T-cell (primary cell): ENCODE measurements at regions of chr22 and their contacts with region 1.

Region 1: GRCh38 chr22:41746567-41747400 is 47.5 kb downstream of the MEI1 start:
- DNase-seq: peak; percentile 4 to 78 (median 33)
- ATAC-seq: peak; percentile 82 to 94 (median 84)
- H3K4me3 ChIP-seq: no peak overlapping the region
- H3K4me3 Mint-ChIP-seq: no peak overlapping the region
- H3K27ac ChIP-seq: no peak overlapping the region
- H3K27ac Mint-ChIP-seq: no peak overlapping the region
- H3K4me1 ChIP-seq: peaks cover 0 to 4% of the 10 kb centered on the region in 2 experiments
- H3K4me1 Mint-ChIP-seq: peaks cover 0 to 5% (median 3%) of the 10 kb centered on the region in 3 donors
- H3K27me3 ChIP-seq: peaks cover 0 to 11% of the 10 kb centered on the region in 2 experiments
- H3K27me3 Mint-ChIP-seq: peaks cover 3 to 11% of the 10 kb centered on the region in 2 donors

Region 2: DNA sequence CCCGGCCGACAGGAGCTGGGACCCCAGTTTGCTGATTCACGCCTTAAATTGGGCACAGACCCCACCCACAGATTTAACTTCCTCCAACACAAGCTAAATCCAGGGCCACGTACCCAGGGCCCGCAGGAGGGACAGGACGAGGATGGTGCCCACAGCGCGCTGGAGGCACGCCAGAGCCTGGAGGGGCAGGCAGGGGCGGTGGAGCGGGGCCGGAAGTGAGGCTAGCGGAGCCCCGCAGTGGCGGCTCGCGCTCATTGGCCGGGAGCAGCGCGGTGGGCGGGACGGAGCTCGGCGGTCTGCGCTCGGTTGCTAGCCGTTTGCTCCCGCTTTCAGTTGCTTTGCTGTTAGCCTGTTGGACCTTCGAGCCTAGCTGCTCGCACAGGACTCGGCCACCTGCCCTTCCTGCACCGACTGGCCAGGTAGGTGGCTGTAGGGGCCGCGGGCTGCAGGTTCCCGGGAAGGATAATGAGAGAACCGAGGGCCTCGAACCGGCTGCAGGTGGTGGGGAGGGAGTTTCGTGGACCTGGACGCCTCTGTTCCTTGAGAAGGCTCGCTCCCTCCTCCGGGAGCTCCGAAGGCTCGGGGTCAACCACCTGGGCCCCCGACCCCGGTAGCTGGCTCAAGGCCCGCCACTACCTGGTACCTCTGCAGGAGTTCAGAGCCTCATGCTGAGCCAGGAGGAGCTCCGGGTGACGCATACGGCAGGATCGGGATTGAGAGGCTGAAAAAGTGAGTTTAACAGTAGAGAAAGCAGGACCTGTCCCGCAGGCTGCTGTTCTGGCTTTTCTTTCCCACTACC is 53.8 kb after region 1 on chr22 and contains the start of gene CCDC134:
- CTCF ChIA-PET with region 1: interaction called in 1 of 2 experiments, 15 read pairs
- POLR2A ChIA-PET with region 1: no interaction called
- DNase-seq: peak; percentile 83 to 94 (median 89)
- ATAC-seq: peak; percentile 97 to 99 (median 98)
- H3K4me3 ChIP-seq: peak within 1 kb of the TSS; percentile 92 to 96
- H3K4me3 Mint-ChIP-seq: peak within 1 kb of the TSS; percentile 93 to 97 (median 96)
- H3K27ac ChIP-seq: peak within 1 kb of the TSS; percentile 92
- H3K27ac Mint-ChIP-seq: peak within 1 kb of the TSS; percentile 98 to 99
- H3K4me1 ChIP-seq: peaks cover 13 to 36% of the 10 kb centered on the region in 2 experiments
- H3K4me1 Mint-ChIP-seq: peaks cover 38 to 52% (median 48%) of the 10 kb centered on the region in 3 donors
- H3K27me3 ChIP-seq: no peaks in the 10 kb centered on the region
- H3K27me3 Mint-ChIP-seq: no peaks in the 10 kb centered on the region
- total RNA-seq, gene CCDC134: 14.4 to 21.7 (median 16.7) TPM